Activated CD4-positive, alpha-beta memory T cell treated with anti-CD3 and anti-CD28 coated beads, Interleukin-2, amount 10 ng/mL, durations not matched to agents 7 days and 5 days (primary cell): ENCODE measurements at regions of chr1 and their contacts with region 1.

Region 1: GRCh38 chr1:229258031-229258756 is 12.7 kb upstream of the RAB4A start:
- DNase-seq: peak; percentile 65
- H3K4me3 Mint-ChIP-seq: no peak overlapping the region
- H3K27ac Mint-ChIP-seq: peak overlapping the region; percentile 42
- H3K4me1 Mint-ChIP-seq: peaks cover 30% of the 10 kb centered on the region
- H3K27me3 Mint-ChIP-seq: no peaks in the 10 kb centered on the region

Region 2: GRCh38 chr1:229087339-229087738 is 170.9 kb before region 1 on chr1:
- CTCF ChIA-PET with region 1: no interaction called
- POLR2A ChIA-PET with region 1: no interaction called
- DNase-seq: no peak
- H3K4me3 Mint-ChIP-seq: no peak overlapping the region
- H3K27ac Mint-ChIP-seq: no peak overlapping the region
- H3K4me1 Mint-ChIP-seq: no peaks in the 10 kb centered on the region
- H3K27me3 Mint-ChIP-seq: peaks cover 23% of the 10 kb centered on the region

Region 3: GRCh38 chr1:229227298-229227919 is 30.8 kb before region 1 on chr1:
- CTCF ChIA-PET with region 1: interaction called, 24 read pairs
- POLR2A ChIA-PET with region 1: interaction called, 4 read pairs
- DNase-seq: peak; percentile 82
- H3K4me3 Mint-ChIP-seq: no peak overlapping the region
- H3K27ac Mint-ChIP-seq: no peak overlapping the region
- H3K4me1 Mint-ChIP-seq: peaks cover 5% of the 10 kb centered on the region
- H3K27me3 Mint-ChIP-seq: peaks cover 25% of the 10 kb centered on the region

Region 4: DNA sequence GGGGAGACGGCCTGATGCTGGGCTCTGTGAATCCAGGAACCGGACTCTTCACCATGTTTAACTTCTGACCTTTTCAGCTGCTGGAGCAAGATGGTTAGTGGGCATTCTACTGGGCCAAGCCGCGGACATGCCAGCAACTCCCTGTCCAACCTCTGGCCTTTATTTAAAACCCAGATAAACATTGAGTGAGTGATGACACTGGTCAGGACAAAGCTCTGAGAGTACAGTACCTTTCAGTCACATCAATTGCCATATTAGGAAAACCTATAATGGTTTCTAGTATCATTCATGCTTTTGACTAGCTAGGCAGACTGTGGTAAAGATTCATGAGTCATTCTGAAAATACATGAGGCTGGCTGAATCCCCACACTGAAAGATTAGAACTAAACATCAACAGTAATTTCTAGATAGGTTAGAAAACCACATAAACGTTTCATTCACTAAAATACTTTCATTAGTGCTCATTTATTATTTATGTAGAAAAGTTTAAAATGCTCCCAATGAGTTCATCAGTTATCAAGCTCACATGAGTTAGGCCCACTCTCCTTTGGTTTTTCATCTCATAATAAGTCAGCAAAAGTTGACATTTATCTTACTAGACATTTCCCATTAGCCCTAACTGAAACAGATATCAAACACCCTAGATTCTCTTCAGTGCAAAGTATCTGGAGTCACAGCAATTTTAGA is 182.8 kb after region 1 on chr1:
- CTCF ChIA-PET with region 1: interaction called, 10 read pairs
- POLR2A ChIA-PET with region 1: interaction called, 3 read pairs
- DNase-seq: no peak
- H3K4me3 Mint-ChIP-seq: no peak overlapping the region
- H3K27ac Mint-ChIP-seq: peak overlapping the region; percentile 58
- H3K4me1 Mint-ChIP-seq: peaks cover 23% of the 10 kb centered on the region
- H3K27me3 Mint-ChIP-seq: peaks cover 24% of the 10 kb centered on the region

Region 5: GRCh38 chr1:229479660-229480399 is 221.6 kb after region 1 on chr1:
- CTCF ChIA-PET with region 1: interaction called, 145 read pairs
- POLR2A ChIA-PET with region 1: interaction called, 6 read pairs
- DNase-seq: no peak
- H3K4me3 Mint-ChIP-seq: no peak overlapping the region
- H3K27ac Mint-ChIP-seq: no peak overlapping the region
- H3K4me1 Mint-ChIP-seq: peaks cover 10% of the 10 kb centered on the region
- H3K27me3 Mint-ChIP-seq: no peaks in the 10 kb centered on the region

Region 6: DNA sequence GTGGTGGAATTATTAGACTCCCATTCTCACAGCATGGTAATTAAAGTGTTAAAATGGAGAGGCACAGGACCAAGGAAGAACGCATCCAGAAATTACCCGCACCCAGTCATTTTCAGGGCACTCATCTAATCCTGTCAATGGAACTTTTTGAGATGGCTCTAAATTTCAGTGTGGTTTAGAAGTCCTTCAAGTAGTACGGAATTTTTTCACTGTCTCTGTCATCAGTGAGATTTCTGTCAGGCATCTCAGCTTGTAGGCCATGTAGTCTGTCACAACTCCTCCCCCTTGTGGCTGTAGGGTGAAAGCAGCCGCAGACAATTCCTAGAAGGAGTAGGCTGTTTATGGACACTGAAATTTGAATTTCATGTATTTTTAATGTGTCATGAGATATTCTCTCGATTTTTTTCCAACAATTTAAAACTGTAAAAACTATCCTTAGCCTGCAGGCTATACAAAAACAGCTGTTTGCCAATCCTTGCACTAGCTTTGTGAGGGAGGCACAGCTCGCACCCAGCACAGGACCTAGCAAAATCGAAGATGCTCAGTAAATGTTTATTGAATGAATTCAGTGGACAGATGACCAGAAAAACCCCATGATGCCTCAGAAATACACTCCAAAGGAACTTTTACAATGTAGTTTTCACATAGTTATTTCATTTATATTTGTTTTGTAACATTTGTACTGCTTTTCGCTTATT is 256.5 kb after region 1 on chr1:
- CTCF ChIA-PET with region 1: interaction called, 11 read pairs
- POLR2A ChIA-PET with region 1: interaction called, 4 read pairs
- DNase-seq: peak; percentile 54
- H3K4me3 Mint-ChIP-seq: no peak overlapping the region
- H3K27ac Mint-ChIP-seq: no peak overlapping the region
- H3K4me1 Mint-ChIP-seq: peaks cover 7% of the 10 kb centered on the region
- H3K27me3 Mint-ChIP-seq: no peaks in the 10 kb centered on the region